GM12878 (cell line): ENCODE measurements at regions of chr7 and their contacts with region 1.

Region 1: GRCh38 chr7:122719010-122719578 is 16.4 kb upstream of the RNF148 start:
- DNase-seq: no peak
- ATAC-seq: peak; percentile 61
- H3K4me3 ChIP-seq: no peak overlapping the region
- H3K27ac ChIP-seq: no peak overlapping the region
- H3K4me1 ChIP-seq: no peaks in the 10 kb centered on the region
- H3K27me3 ChIP-seq: no peaks in the 10 kb centered on the region
- CTCF ChIP-seq: no peak
- EP300 ChIP-seq: no peak
- POLR2A ChIP-seq: no peak
- RAD21 ChIP-seq: no peak

Region 2: GRCh38 chr7:122577449-122578003 is 141.6 kb before region 1 on chr7:
- CTCF ChIA-PET with region 1: no interaction called
- POLR2A ChIA-PET with region 1: no interaction called
- RAD21 ChIA-PET with region 1: no interaction called
- SMC1A ChIA-PET with region 1: interaction called, 12 read pairs
- in situ Hi-C with region 1: no loop called
- intact Hi-C with region 1: no loop called
- DNase-seq: no peak
- ATAC-seq: peak; percentile 95
- H3K4me3 ChIP-seq: no peak overlapping the region
- H3K27ac ChIP-seq: no peak overlapping the region
- H3K4me1 ChIP-seq: no peaks in the 10 kb centered on the region
- H3K27me3 ChIP-seq: no peaks in the 10 kb centered on the region
- CTCF ChIP-seq: no peak
- EP300 ChIP-seq: no peak
- POLR2A ChIP-seq: no peak
- RAD21 ChIP-seq: no peak

Region 3: GRCh38 chr7:122702872-122703510 is 16.1 kb before region 1 on chr7 and contains the start of gene RNF148:
- CTCF ChIA-PET with region 1: interaction called, 6 read pairs
- POLR2A ChIA-PET with region 1: no interaction called
- RAD21 ChIA-PET with region 1: interaction called, 3 read pairs
- SMC1A ChIA-PET with region 1: interaction called, 37 read pairs
- in situ Hi-C with region 1: no loop called
- intact Hi-C with region 1: no loop called
- DNase-seq: no peak
- ATAC-seq: no peak
- H3K4me3 ChIP-seq: no peak within 1 kb of the TSS
- H3K27ac ChIP-seq: no peak within 1 kb of the TSS
- H3K4me1 ChIP-seq: no peaks in the 10 kb centered on the region
- H3K27me3 ChIP-seq: no peaks in the 10 kb centered on the region
- CTCF ChIP-seq: no peak
- EP300 ChIP-seq: no peak
- POLR2A ChIP-seq: no peak
- RAD21 ChIP-seq: no peak
- polyA plus RNA-seq, gene RNF148: not detected

Region 4: DNA sequence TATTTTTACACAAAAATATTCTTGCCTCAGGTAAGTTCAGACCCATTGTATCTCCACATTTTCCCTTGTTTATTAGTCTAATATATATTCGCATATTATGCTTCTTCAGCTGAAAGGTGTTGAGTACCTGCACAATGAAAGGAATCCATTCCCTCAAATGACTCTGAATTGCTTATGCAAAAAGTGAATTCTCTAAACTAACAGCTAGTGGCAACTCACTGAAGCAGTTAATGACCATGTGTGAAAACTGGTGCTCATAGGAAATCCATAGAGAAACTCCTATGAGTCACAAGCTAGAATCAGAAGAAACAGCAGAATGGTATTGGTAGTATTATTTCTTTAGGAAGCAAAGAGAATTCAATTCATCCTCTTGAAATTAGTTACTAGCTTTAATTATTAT is 17.1 kb after region 1 on chr7:
- CTCF ChIA-PET with region 1: interaction called, 4 read pairs
- POLR2A ChIA-PET with region 1: interaction called, 6 read pairs
- RAD21 ChIA-PET with region 1: interaction called, 6 read pairs
- SMC1A ChIA-PET with region 1: interaction called, 60 read pairs
- in situ Hi-C with region 1: no loop called
- intact Hi-C with region 1: no loop called
- DNase-seq: no peak
- ATAC-seq: peak; percentile 83
- H3K4me3 ChIP-seq: no peak overlapping the region
- H3K27ac ChIP-seq: no peak overlapping the region
- H3K4me1 ChIP-seq: no peaks in the 10 kb centered on the region
- H3K27me3 ChIP-seq: no peaks in the 10 kb centered on the region
- CTCF ChIP-seq: no peak
- EP300 ChIP-seq: 0 out of 4 replicates have a peak, but pooled peaks of 1 of the 2 experiments have one; percentile 5
- POLR2A ChIP-seq: no peak
- RAD21 ChIP-seq: no peak

Region 5: GRCh38 chr7:122748195-122748594 is 29.1 kb after region 1 on chr7:
- CTCF ChIA-PET with region 1: interaction called, 3 read pairs
- POLR2A ChIA-PET with region 1: interaction called, 3 read pairs
- RAD21 ChIA-PET with region 1: interaction called, 4 read pairs
- SMC1A ChIA-PET with region 1: interaction called, 28 read pairs
- in situ Hi-C with region 1: no loop called
- intact Hi-C with region 1: no loop called
- DNase-seq: no peak
- ATAC-seq: no peak
- H3K4me3 ChIP-seq: no peak overlapping the region
- H3K27ac ChIP-seq: no peak overlapping the region
- H3K4me1 ChIP-seq: no peaks in the 10 kb centered on the region
- H3K27me3 ChIP-seq: no peaks in the 10 kb centered on the region
- CTCF ChIP-seq: no peak
- EP300 ChIP-seq: no peak
- POLR2A ChIP-seq: no peak
- RAD21 ChIP-seq: no peak

Region 6: DNA sequence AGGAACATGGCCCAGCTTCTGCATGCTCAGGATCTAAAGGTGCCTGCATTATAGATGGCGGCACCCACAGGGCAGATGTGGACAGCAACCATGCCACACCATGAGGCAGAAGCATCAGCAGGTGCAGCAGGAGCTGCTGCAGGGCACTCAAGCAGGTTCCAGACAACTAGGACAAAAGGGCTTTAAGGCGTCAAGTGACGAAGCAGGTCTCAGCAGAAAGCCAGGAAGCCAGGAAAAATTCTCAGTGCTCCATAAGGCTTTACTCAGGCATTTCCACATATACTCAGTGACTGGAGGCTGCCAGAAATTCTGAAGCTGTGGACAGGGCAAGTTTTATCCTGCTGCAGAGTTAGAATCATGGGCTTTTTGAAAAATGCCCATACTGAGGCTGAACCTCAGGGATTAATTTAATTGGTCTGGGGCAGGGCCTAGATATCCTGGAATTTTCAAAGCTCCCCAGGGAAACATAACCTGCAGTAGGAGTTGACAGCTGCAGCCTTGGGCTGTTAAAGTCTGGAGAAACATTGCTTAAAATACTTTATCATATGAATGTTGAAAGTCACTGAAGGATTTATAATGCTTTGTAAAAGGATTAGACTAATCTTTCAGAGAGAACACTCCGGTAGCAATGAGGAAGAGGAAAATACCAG is 51.7 kb after region 1 on chr7:
- CTCF ChIA-PET with region 1: interaction called, 3 read pairs
- POLR2A ChIA-PET with region 1: no interaction called
- RAD21 ChIA-PET with region 1: interaction called, 22 read pairs
- SMC1A ChIA-PET with region 1: interaction called, 10 read pairs
- in situ Hi-C with region 1: no loop called
- intact Hi-C with region 1: no loop called
- DNase-seq: no peak
- ATAC-seq: 0 out of 3 replicates have a peak, but pooled peaks have one; percentile 19
- H3K4me3 ChIP-seq: no peak overlapping the region
- H3K27ac ChIP-seq: no peak overlapping the region
- H3K4me1 ChIP-seq: no peaks in the 10 kb centered on the region
- H3K27me3 ChIP-seq: no peaks in the 10 kb centered on the region
- CTCF ChIP-seq: no peak
- EP300 ChIP-seq: no peak
- POLR2A ChIP-seq: no peak
- RAD21 ChIP-seq: no peak